Posterior vena cava (tissue), 2 donors: ENCODE measurements at regions of chr18 and their contacts with region 1.

Region 1: DNA sequence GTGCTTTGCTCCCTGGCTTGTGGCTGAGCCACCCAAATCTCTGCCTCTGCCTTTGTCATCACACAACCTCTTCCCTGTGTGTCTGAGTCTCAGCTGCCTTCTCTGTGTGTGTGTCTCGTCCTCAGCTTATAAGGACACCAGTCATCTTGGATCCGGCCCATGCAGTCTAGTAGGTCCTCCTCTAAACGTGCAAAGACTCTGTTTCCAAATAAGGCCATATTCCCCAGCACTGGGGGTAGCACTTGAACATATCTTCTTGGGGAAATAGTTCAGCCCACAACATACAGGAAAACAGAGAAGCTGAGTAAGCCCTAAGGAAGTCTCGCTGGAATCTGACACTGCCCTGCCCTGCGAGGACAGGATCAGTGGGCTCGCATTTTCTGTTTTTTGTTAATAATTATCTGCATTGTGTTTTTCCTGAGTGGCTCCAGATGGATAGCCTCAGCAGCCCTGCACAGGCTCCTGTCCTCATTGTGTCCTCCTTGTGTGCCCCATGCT is 42.1 kb downstream of the MTCL1 start:
- DNase-seq: no peak

Region 2: DNA sequence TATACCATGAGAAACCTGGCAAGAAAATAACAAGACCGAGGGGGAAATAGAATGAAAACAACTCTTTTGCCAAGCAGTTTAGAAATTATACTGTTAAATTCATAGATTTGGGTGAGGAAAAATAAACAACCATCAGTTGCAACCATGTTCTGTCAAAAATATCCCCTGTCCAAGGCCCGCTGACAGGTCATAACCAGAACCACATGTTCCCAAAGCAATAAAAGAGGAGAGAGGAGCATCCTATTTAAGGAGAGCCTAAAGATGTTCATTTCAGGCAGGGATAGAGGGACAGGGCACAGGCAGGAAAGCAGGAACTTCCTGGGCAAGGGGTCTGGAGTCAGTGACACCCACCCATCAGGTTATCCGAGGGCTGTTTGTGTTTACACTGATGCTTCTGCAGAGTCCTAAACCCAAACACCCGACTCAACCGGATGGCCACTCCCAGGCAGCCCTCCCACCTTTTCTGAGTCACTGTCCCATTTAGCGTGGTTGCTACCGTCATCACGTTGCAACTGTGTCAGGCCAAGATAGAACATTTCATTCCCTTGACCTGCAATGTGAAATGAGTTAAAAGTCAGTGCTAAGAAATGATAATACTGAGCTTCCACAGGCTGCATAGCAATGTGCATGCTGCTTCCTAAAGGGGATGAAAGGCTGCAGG is 606.5 kb before region 1 on chr18:
- intact Hi-C with region 1: loop called in 1 of 2 experiments (anchors 10 kb)
- DNase-seq: no peak

Region 3: DNA sequence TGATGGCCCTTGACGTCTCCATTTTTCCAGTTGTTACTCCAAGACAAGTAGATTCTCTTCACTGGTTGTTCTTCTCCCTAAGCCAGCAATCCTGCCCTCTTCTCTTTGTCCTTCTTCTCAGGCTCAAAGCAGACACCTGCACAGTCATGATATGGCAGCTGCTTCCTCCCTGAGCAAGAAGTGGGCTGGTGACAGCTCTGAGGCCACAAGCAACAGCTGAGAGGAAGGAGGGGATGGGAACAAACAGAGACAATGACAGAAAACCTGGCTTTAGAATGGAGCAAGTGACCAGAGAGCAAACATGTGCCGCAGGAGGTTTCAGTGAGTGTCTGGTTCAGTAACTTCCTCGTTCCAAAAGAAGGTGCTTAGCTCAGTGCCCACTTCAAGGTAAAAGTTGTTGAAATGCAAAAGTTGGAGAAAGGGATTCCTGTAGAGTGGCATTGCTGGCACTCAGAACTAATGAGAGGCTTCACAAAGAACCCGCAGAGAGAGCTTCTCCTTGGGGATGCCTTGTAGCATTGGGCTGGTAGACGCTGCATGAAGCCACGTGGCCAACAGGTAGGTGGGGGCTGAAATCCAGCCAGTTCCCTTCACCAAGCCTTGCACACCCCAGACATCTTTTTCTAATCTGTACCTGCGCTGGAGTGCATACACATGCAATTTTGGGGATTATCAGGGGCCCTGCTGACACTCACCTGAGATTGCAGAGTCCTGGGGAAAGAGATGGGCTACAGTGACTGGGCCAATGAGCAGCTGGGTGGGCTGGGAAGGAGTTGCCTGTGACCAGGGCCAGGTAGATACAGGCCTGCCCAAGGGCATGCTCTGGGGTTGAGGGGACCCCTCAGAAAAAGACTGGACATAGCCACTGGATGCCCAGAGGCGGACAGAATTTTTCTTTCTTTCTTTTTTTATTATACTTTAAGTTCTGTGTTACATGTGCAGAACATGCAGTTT is 291.6 kb before region 1 on chr18:
- intact Hi-C with region 1: no loop called
- DNase-seq: no peak